BJ (cell line): ENCODE measurements at regions of chr15 and their contacts with region 1.

Region 1: GRCh38 chr15:74433592-74434262 is at the start of gene SEMA7A:
- DNase-seq: no peak
- H3K4me3 ChIP-seq: peak within 1 kb of the TSS; percentile 91
- H3K27me3 ChIP-seq: no peaks in the 10 kb centered on the region
- CTCF ChIP-seq: no peak
- polyA plus RNA-seq, gene SEMA7A: 14.1 and 22.7 TPM in 2 replicates

Region 2: GRCh38 chr15:74373731-74374647 is 59.7 kb before region 1 on chr15:
- CTCF ChIA-PET with region 1: interaction called, 622 read pairs
- POLR2A ChIA-PET with region 1: no interaction called
- DNase-seq: no peak
- H3K4me3 ChIP-seq: peak overlapping the region; percentile 69
- H3K27me3 ChIP-seq: peaks cover 5% of the 10 kb centered on the region
- CTCF ChIP-seq: peak; percentile 88

Region 3: GRCh38 chr15:74418575-74419496 is 14.9 kb before region 1 on chr15:
- CTCF ChIA-PET with region 1: interaction called, 7 read pairs
- POLR2A ChIA-PET with region 1: interaction called, 10 read pairs
- DNase-seq: no peak
- H3K4me3 ChIP-seq: no peak overlapping the region
- H3K27me3 ChIP-seq: no peaks in the 10 kb centered on the region
- CTCF ChIP-seq: no peak

Region 4: DNA sequence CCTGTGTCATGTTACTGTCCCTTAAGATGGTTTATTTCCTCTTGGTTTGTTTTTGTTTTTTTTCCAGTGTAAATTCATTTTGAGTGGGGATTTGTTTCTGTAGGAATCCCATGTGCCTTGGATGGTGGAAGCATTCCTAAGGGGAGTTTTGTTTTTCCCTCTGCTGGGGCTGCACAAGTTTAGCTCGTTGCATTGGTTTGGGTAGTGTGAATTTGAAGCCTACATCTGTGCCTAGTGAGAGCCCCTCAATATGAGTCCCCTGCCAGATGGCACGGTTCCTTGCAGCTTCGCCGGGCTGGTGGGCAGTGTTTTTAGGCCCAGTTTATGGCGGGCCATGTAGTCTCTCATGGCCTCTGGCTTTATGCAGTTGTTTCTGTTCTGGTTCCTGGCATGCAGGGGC is 125.0 kb after region 1 on chr15:
- CTCF ChIA-PET with region 1: no interaction called
- POLR2A ChIA-PET with region 1: no interaction called
- DNase-seq: no peak
- H3K4me3 ChIP-seq: no peak overlapping the region
- H3K27me3 ChIP-seq: no peaks in the 10 kb centered on the region
- CTCF ChIP-seq: no peak

Region 5: GRCh38 chr15:74610302-74610951 is 176.7 kb after region 1 on chr15:
- CTCF ChIA-PET with region 1: no interaction called
- POLR2A ChIA-PET with region 1: no interaction called
- DNase-seq: no peak
- H3K4me3 ChIP-seq: no peak overlapping the region
- H3K27me3 ChIP-seq: peaks cover 5% of the 10 kb centered on the region
- CTCF ChIP-seq: no peak